ENCODE measurements at regions of chr17 and their contacts with region 1.

Region 1: DNA sequence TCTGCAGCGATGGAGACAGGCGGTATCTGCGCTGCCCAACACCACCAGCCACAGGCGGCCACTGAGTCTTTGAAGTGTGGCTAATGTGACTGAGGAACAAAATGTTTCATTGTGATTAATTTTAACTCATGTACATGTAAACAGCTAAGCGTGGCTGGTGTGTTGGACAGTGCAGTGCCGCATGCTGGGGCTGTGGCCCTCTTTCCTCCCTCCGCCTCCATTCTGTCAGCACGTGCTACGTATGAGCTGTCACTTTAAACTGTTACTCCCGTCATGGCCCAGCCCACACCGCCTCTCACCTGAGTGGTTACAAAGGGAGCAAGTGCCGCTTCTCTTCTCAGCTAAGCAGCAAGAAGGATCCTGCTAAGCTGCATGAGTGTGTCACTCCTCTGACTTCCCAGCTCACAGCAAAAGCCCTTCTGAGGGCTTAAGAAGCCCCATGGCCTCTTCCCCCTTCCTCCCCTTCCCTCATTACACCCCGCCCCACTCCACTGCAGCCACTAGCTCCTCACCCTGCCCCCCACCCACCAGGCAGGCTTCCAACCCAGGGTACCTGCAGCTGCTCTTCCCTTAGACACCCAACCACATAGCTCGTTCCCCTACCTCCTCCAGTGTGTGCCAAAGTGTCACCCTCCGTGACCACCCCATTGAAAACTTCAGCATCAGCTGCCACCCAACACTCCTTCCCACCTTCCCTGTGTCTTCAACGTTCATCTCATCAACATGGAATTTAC is 15.0 kb downstream of the HASPIN start:
- DNase-seq: peak; percentile 58
- H3K4me3 Mint-ChIP-seq: peak overlapping the region; percentile 47
- H3K27ac Mint-ChIP-seq: peak overlapping the region; percentile 61
- H3K4me1 Mint-ChIP-seq: peaks cover 21% of the 10 kb centered on the region
- H3K27me3 Mint-ChIP-seq: no peaks in the 10 kb centered on the region
- CTCF ChIP-seq: no peak

Region 2: GRCh38 chr17:3683054-3683511 is 55.6 kb before region 1 on chr17:
- CTCF ChIA-PET with region 1: interaction called, 9 read pairs
- POLR2A ChIA-PET with region 1: no interaction called
- intact Hi-C with region 1: loop called (anchors 2 kb)
- DNase-seq: peak; percentile 44
- H3K4me3 Mint-ChIP-seq: no peak overlapping the region
- H3K27ac Mint-ChIP-seq: no peak overlapping the region
- H3K4me1 Mint-ChIP-seq: peaks cover 5% of the 10 kb centered on the region
- H3K27me3 Mint-ChIP-seq: no peaks in the 10 kb centered on the region
- CTCF ChIP-seq: peak; percentile 85

Region 3: GRCh38 chr17:3750926-3751325 is 12.2 kb after region 1 on chr17:
- CTCF ChIA-PET with region 1: interaction called, 15 read pairs
- POLR2A ChIA-PET with region 1: interaction called, 4 read pairs
- intact Hi-C with region 1: no loop called
- DNase-seq: no peak
- H3K4me3 Mint-ChIP-seq: no peak overlapping the region
- H3K27ac Mint-ChIP-seq: no peak overlapping the region
- H3K4me1 Mint-ChIP-seq: no peaks in the 10 kb centered on the region
- H3K27me3 Mint-ChIP-seq: peaks cover 27% of the 10 kb centered on the region
- CTCF ChIP-seq: no peak

Region 4: GRCh38 chr17:3809135-3809534 is 70.4 kb after region 1 on chr17:
- CTCF ChIA-PET with region 1: interaction called, 22 read pairs
- POLR2A ChIA-PET with region 1: interaction called, 5 read pairs
- intact Hi-C with region 1: no loop called
- DNase-seq: no peak
- H3K4me3 Mint-ChIP-seq: no peak overlapping the region
- H3K27ac Mint-ChIP-seq: no peak overlapping the region
- H3K4me1 Mint-ChIP-seq: no peaks in the 10 kb centered on the region
- H3K27me3 Mint-ChIP-seq: no peaks in the 10 kb centered on the region
- CTCF ChIP-seq: no peak

Region 5: GRCh38 chr17:3827124-3827773 is 88.5 kb after region 1 on chr17:
- CTCF ChIA-PET with region 1: interaction called, 129 read pairs
- POLR2A ChIA-PET with region 1: interaction called, 5 read pairs
- intact Hi-C with region 1: loop called (anchors 1 kb)
- DNase-seq: peak; percentile 76
- H3K4me3 Mint-ChIP-seq: no peak overlapping the region
- H3K27ac Mint-ChIP-seq: no peak overlapping the region
- H3K4me1 Mint-ChIP-seq: no peaks in the 10 kb centered on the region
- H3K27me3 Mint-ChIP-seq: no peaks in the 10 kb centered on the region
- CTCF ChIP-seq: peak; percentile 64

Region 6: GRCh38 chr17:3845621-3846441 is 107.1 kb after region 1 on chr17 and contains the start of gene NCBP3:
- CTCF ChIA-PET with region 1: interaction called, 72 read pairs
- POLR2A ChIA-PET with region 1: interaction called, 5 read pairs
- intact Hi-C with region 1: loop called (anchors 1 kb)
- DNase-seq: peak; percentile 93
- H3K4me3 Mint-ChIP-seq: peak within 1 kb of the TSS; percentile 80
- H3K27ac Mint-ChIP-seq: peak within 1 kb of the TSS; percentile 86
- H3K4me1 Mint-ChIP-seq: peaks cover 14% of the 10 kb centered on the region
- H3K27me3 Mint-ChIP-seq: no peaks in the 10 kb centered on the region
- CTCF ChIP-seq: peak; percentile 74
- total RNA-seq, gene NCBP3: 47.1 and 52.5 TPM in 2 replicates

Region 7: DNA sequence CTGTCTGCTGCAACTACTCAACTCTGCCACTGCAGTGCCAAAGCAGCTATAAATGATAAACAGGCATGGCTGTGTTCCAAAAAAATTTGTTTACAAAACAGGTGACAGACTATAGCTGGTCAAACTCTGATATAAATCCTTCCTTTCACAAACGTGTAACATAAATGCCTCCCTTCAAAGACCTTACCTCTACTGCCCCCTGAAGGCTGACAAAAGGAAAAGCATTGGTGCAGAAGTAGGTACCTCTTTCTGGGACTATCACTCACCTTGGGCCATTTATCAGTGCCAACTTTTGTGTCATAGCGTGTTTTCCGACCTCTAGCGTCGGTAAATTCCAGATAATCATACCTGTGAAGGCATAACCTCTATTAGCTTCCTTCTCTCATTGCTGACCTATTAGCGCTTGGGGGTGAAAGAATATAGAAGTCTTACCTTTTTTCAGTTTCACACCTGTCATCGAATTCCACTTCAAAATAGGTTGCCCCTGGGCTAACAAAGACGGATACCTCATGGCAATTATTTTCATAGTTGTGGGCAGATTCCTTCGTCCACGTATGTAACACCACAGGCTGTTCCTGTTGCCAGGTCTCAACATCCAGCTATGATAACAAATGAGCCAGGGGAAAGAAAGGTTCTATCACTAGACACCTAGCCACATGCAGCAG is 336.2 kb after region 1 on chr17:
- CTCF ChIA-PET with region 1: interaction called, 3 read pairs
- POLR2A ChIA-PET with region 1: interaction called, 3 read pairs
- intact Hi-C with region 1: loop called (anchors 10 kb)
- DNase-seq: peak; percentile 71
- H3K4me3 Mint-ChIP-seq: no peak overlapping the region
- H3K27ac Mint-ChIP-seq: no peak overlapping the region
- H3K4me1 Mint-ChIP-seq: no peaks in the 10 kb centered on the region
- H3K27me3 Mint-ChIP-seq: no peaks in the 10 kb centered on the region
- CTCF ChIP-seq: peak; percentile 58